Mammary epithelial cell (primary cell): ENCODE measurements at regions of chr12 and their contacts with region 1.

Region 1: DNA sequence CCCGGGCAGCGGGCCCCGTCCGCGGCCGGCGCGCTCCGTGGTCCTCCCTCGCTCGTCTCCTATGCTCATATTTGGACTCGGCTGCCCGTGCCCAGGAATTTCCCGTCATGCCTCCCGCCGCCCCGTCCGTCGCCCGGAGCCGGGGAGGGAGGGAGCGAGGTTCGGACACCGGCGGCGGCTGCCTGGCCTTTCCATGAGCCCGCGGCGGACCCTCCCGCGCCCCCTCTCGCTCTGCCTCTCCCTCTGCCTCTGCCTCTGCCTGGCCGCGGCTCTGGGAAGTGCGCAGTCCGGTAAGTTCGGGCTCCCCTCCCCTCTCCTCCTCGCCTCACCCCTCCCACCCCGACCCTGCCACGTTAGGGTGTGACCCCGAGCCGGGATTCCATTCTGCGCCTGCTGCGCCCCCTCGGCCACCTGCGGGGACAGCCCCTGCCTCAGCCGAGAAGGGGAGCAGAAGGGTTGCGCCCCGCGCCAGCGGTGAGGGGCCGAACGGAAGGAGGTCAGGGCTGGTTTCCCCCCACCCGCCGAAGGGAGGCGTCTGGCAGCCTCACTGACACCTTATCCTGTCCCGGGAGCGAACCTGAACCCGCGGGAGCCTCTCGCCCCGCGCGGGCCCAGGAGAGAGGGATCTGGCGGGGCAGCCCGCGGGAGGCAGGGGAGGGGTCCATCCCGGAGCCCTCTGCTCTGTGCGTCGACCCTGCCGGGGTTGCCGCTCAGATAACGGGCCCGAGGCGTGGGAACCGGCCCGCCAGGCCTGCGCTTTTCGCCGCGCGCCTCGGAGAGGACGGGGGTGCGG is at the start of gene MSRB3:
- DNase-seq: peak; percentile 64
- H3K4me3 ChIP-seq: peak within 1 kb of the TSS; percentile 56 to 88 (median 75)
- H3K27ac ChIP-seq: peak within 1 kb of the TSS; percentile 46
- H3K4me1 ChIP-seq: peaks cover 4% of the 10 kb centered on the region
- H3K27me3 ChIP-seq: no peaks in the 10 kb centered on the region
- CTCF ChIP-seq: no peak
- total RNA-seq, gene MSRB3: 40.5 to 56.8 TPM

Region 2: GRCh38 chr12:65169320-65170208 is 109.2 kb before region 1 on chr12 and contains the start of gene LEMD3:
- CTCF ChIA-PET with region 1: no interaction called
- dilution Hi-C with region 1: no loop called
- in situ Hi-C with region 1: no loop called
- intact Hi-C with region 1: loop called (anchors 1 kb)
- DNase-seq: peak; percentile 97
- H3K4me3 ChIP-seq: peak within 1 kb of the TSS; percentile 63 to 99 (median 97)
- H3K27ac ChIP-seq: peak within 1 kb of the TSS; percentile 89
- H3K4me1 ChIP-seq: peaks cover 10% of the 10 kb centered on the region
- H3K27me3 ChIP-seq: no peaks in the 10 kb centered on the region
- CTCF ChIP-seq: peak in 1 of 2 donors; percentile 4
- total RNA-seq, gene LEMD3: 31.2 to 47.0 TPM